Mammary epithelial cell (primary cell): ENCODE measurements at regions of chr17 and their contacts with region 1.

Region 1: DNA sequence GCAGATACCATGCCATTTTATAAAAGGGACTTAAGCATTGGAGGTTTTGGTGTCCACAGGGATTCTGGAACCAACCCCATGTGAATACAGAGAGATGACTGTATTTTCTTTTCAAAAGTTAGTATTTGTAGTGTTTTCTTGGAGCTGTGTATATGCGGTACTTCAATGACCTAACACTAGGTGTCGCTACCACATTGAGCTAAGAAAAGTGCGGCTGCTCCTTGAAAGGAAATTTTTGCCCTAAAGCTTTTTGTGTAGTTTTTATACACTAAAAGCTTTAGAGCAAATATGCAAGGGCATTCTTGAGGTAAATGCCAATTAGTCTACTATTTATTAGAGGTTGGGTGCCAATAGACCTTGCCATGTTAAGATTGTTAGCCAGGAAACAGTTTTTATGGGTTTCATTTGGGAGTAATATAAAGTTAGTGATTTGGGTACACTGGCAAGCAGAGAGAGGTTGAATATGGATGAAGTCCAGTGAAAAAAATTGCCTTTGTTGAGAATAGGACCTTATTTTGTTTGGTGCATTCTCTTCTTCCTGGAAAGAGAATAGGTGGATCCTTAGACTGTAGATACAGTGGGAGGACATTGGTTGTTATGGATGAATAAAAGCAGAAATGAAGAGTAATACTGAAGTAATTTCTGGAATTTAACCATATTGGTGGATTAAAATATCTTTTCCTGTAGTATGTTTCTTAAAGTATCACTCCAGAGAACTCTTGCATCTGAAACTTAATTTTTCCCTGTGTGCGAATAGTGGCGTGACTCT is 43.3 kb downstream of the BCAS3 start:
- DNase-seq: peak; percentile 35
- H3K4me3 ChIP-seq: no peak overlapping the region
- H3K27ac ChIP-seq: no peak overlapping the region
- H3K4me1 ChIP-seq: no peaks in the 10 kb centered on the region
- H3K27me3 ChIP-seq: no peaks in the 10 kb centered on the region
- CTCF ChIP-seq: peak; percentile 81 to 87

Region 2: DNA sequence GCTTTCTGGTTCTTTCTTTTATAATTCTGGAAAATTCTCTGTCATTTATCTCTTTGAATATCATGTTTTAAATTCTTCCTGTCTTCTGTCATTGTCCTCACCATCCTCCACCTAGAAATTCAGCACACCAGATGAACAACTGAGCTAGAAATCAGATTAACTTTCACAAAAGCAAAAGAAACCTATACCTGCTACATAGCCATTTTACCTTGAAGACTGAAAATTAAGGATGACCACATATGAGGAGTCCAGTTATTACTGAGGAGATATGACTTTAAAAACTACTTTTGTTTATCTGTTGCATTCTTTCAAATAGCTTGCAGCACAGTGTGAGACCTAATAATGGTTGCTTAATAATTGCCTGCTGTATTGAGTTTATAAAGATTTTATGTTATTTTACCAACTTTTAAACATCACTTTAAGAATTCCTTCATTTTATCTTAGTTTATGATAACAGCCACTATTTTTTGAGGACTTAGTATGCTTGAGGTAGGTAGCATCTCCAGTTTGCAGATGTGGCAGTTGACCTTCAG is 61.0 kb after region 1 on chr17:
- CTCF ChIA-PET with region 1: no interaction called
- dilution Hi-C with region 1: no loop called
- in situ Hi-C with region 1: no loop called
- intact Hi-C with region 1: no loop called
- DNase-seq: no peak
- H3K4me3 ChIP-seq: no peak overlapping the region
- H3K27ac ChIP-seq: no peak overlapping the region
- H3K4me1 ChIP-seq: no peaks in the 10 kb centered on the region
- H3K27me3 ChIP-seq: no peaks in the 10 kb centered on the region
- CTCF ChIP-seq: no peak

Region 3: DNA sequence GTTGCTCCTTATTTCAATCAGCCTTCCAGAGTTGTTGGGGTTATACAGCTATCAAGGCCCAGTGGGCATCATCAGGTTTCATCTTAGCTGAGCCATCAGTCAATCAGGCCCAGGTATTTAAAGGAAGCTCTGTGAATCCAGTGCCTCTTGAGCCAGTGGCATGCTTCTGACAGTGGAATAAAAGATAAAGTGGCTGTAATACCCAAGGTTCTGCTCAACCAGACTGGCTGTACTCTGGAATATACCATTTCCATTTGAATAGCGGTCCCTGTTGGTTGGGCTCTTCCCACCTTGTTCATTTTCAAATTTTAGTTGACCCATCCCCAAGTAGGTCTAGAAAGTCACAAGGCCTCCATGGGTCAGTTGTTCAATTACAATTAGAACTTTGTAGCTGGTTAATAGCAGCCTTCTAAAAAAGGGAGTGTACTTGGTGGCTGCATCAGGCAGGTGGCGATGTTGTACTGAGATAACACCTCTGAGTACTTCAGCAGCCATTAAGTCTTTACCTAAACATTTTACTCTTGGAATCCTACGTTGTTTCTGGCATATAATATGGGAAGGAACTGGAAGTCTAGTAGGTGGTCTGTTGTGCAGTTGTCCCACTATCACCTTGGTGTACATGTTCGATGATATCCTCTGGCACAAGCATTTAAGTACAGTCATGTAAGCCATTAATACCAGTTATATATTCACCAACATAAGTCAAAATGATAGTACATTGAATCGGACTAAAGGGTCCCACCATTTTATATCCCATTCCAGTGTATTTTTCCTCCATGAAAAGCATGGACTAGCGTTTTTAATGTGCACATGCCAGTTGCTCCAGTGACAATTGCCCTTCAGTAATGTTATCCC is 250.8 kb after region 1 on chr17:
- CTCF ChIA-PET with region 1: interaction called, 7 read pairs
- dilution Hi-C with region 1: no loop called
- in situ Hi-C with region 1: no loop called
- intact Hi-C with region 1: loop called (anchors 5 kb)
- DNase-seq: peak; percentile 28
- H3K4me3 ChIP-seq: no peak overlapping the region
- H3K27ac ChIP-seq: no peak overlapping the region
- H3K4me1 ChIP-seq: no peaks in the 10 kb centered on the region
- H3K27me3 ChIP-seq: no peaks in the 10 kb centered on the region
- CTCF ChIP-seq: peak; percentile 57 to 69